OCI-LY7 (cell line): ENCODE measurements at regions of chr2 and their contacts with region 1.

Region 1: DNA sequence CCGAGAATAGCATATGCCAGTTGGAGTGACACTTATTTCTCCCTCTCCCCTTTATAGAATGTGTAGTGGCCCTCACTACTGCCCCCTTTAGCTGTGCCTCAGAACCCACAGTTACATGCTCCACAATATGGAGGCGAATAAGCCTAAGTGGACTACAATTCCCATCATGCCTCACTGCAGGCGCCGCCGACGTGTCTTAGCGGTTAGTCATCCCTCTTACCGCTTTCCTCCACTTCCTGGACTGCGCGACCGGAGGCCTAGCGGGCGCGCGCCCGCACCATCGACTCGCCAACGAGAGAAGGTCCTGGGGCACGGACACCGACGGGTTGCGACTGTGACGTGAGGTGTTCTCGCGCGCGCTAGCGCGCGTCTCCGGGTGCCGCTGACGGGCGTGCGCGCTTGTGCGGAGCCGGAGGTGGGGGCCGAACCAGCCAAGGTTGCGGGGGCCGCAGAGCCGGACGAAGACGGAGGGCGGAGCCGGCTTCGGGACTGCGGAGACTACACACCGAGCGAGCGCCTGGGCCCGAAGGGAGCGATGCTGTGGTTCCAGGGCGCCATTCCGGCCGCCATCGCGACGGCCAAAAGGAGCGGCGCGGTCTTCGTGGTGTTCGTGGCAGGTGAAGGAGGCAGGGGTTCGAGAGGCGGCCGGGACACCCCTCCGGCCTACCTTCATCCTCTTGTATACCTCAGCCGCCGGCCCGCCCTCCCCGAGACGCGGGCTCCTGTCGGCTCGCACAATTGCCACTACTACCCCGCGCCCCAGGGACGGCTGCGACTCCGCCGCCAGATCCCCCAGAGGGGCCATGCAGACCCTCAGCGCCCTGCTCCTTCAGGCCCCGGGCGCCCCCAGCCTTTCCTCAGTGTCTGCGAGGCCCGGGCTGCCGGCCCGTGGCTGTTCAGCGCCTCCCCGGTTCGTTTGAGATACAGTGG is at the start of gene UBXN4:
- DNase-seq: peak; percentile 99
- H3K4me3 ChIP-seq: peak within 1 kb of the TSS; percentile 91
- H3K27ac ChIP-seq: peak within 1 kb of the TSS; percentile 78
- H3K4me1 ChIP-seq: peaks cover 17% of the 10 kb centered on the region
- CTCF ChIP-seq: peak; percentile 84
- total RNA-seq, gene UBXN4: 48.4 and 55.4 TPM in 2 replicates

Region 2: DNA sequence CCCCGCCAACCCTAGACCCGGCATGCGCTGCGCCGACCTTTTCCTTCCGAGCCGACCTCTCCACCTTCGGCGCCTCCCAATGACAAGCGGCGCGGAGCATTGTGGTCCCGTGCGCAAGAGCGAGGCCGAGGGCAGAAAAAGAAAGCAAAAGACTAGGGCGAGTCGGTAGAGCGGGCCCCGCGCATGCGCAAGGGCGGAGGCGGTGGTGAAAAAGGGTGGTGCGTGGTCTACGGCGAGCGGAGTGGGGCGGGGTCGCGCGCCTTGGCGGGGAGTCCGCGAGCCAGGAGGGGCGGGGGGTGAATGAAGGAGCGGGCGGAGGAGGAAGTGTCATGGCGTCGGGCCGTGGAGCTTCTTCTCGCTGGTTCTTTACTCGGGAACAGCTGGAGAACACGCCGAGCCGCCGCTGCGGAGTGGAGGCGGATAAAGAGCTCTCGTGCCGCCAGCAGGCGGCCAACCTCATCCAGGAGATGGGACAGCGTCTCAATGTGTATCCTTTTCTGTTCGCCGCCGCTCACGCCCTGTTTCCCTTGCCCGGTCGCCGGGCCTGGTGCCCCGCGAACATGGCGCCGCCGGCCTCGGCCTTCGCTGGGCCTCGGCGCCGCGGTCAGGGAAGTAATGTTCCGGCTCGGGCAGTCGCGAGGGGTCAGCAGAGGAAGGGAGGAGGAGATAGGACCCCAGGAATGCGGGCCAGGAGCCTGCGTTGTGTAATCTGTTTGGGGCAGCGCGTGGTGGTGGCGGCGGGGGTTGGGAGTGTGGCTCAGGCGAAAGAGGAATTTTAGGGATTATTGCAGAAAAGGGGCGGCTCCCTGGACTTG is 822.9 kb before region 1 on chr2 and contains the start of gene CCNT2:
- CTCF ChIA-PET with region 1: no interaction called
- POLR2A ChIA-PET with region 1: no interaction called
- intact Hi-C with region 1: loop called (anchors 1 kb)
- DNase-seq: peak; percentile 99
- H3K4me3 ChIP-seq: peak within 1 kb of the TSS; percentile 93
- H3K27ac ChIP-seq: peak within 1 kb of the TSS; percentile 90
- H3K4me1 ChIP-seq: peaks cover 23% of the 10 kb centered on the region
- CTCF ChIP-seq: no peak
- total RNA-seq, gene CCNT2: 17.7 and 32.8 TPM in 2 replicates

Region 3: DNA sequence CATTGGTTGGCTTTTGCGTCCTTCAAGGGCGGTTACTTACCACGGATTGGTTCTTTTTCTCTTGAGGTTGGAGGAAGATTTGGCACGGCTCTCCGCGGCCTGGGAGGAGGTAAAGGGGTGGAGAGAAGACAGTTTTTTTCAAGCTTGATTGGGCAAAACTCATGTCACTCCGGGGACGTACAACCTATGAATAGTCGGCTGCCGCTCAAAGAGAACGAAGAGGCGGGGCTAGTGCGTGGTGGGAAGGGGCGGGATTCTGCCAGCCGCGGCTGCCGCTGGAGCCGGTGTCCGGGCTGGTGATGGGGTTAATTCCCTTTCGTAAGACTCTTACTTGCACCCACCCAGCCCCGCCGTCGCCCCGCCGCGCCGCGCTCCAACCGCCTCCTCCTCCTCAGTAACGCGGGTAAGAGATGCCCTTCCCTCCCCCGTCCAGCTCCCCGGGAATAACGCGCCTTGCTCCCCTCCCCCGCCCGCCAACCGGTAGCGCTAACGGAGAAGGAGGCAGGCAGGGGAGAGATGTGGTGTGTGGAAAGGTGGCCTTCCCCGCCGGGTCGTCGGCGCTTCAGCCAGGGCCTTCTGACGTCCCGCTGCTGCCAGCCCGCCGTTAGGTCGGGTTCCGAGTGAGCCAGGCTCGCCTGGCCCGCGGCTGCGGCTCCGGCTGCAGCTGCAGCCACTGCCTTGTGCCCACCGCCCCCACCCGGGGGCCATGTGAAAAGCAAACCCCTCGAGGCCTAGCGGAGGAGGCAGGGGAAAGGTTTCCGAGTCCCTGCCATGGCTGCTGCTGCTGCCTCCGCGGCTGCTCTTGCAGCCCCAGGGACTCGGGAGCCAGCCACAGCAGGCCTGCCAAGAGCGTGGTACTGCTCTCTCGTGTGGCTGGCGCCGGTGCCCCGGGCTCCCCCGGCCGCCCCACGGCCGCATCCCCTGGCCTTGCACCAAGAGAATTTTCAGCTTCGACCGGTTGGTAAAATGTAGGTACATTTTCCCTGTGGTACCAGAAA is 210.1 kb before region 1 on chr2 and contains the start of gene R3HDM1:
- CTCF ChIA-PET with region 1: no interaction called
- POLR2A ChIA-PET with region 1: interaction called, 6 read pairs
- intact Hi-C with region 1: loop called (anchors 1 kb)
- DNase-seq: peak; percentile 100
- H3K4me3 ChIP-seq: peak within 1 kb of the TSS; percentile 87
- H3K27ac ChIP-seq: peak within 1 kb of the TSS; percentile 85
- H3K4me1 ChIP-seq: peaks cover 41% of the 10 kb centered on the region
- CTCF ChIP-seq: peak; percentile 53
- total RNA-seq, gene R3HDM1: 28.7 and 67.5 TPM in 2 replicates

Region 4: GRCh38 chr2:135637456-135638087 is 104.1 kb before region 1 on chr2:
- CTCF ChIA-PET with region 1: no interaction called
- POLR2A ChIA-PET with region 1: no interaction called
- intact Hi-C with region 1: no loop called
- DNase-seq: no peak
- H3K4me3 ChIP-seq: no peak overlapping the region
- H3K27ac ChIP-seq: no peak overlapping the region
- H3K4me1 ChIP-seq: no peaks in the 10 kb centered on the region
- CTCF ChIP-seq: no peak

Region 5: DNA sequence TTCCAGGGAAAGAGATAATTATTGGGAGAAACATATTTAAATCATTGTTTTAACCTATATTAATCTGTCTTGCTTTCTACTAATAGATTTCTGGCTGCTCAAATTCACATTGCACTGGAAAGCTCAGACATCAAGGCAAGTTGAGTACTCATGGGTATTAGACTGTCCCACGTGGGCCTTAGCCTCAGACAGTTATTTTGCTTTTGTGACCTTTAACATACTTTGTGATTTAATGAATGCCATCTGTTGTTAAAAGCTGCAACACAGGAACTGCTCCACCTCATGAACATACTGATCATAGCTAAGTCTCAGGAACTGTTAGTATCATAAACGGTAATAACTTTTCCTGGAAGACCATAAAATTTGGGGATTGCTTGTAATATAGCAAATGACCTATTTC is 98.1 kb after region 1 on chr2:
- CTCF ChIA-PET with region 1: interaction called, 20 read pairs
- POLR2A ChIA-PET with region 1: no interaction called
- intact Hi-C with region 1: no loop called
- DNase-seq: no peak
- H3K4me3 ChIP-seq: no peak overlapping the region
- H3K27ac ChIP-seq: no peak overlapping the region
- H3K4me1 ChIP-seq: peaks cover 6% of the 10 kb centered on the region
- CTCF ChIP-seq: no peak